Heart left ventricle (tissue), 16 donors: ENCODE measurements at regions of chr6 and their contacts with region 1.

Region 1: GRCh38 chr6:16128759-16129622 is at the start of gene MYLIP:
- DNase-seq: peak; percentile 98 to 99 (median 99)
- ATAC-seq: peak; percentile 96 to 98 (median 98)
- H3K4me3 ChIP-seq: peak within 1 kb of the TSS; percentile 67 to 99 (median 94)
- H3K27ac ChIP-seq: peak within 1 kb of the TSS; percentile 91 to 99 (median 96)
- H3K4me1 ChIP-seq: peaks cover 0 to 49% (median 34%) of the 10 kb centered on the region in 12 donors
- H3K27me3 ChIP-seq: no peaks in the 10 kb centered on the region
- CTCF ChIP-seq: peak; percentile 55 to 87 (median 72)
- POLR2A ChIP-seq: peak; percentile 99 to 100
- total RNA-seq, gene MYLIP: 6.6 to 19.9 (median 13.7) TPM

Region 2: GRCh38 chr6:15691250-15691869 is 437.6 kb before region 1 on chr6:
- intact Hi-C with region 1: loop called (anchors 1 to 5 kb)
- DNase-seq: peak; percentile 84 to 91 (median 87)
- ATAC-seq: peak; percentile 82 to 100 (median 96)
- H3K4me3 ChIP-seq: peak overlapping the region in 10 of 12 donors; percentile 13 to 56 (median 32)
- H3K27ac ChIP-seq: peak overlapping the region in 3 of 12 donors; percentile 37 to 51 (median 43)
- H3K4me1 ChIP-seq: peaks cover 0 to 17% (median 9%) of the 10 kb centered on the region in 12 donors
- H3K27me3 ChIP-seq: no peaks in the 10 kb centered on the region
- CTCF ChIP-seq: peak; percentile 98 to 100 (median 100)
- POLR2A ChIP-seq: no peak

Region 3: GRCh38 chr6:15879382-15880261 is 249.4 kb before region 1 on chr6:
- intact Hi-C with region 1: loop called in 1 of 10 experiments (anchors 5 kb)
- DNase-seq: peak; percentile 68 to 87 (median 81)
- ATAC-seq: peak; percentile 44 to 89 (median 82)
- H3K4me3 ChIP-seq: no peak overlapping the region
- H3K27ac ChIP-seq: peak overlapping the region in 6 of 12 donors; percentile 31 to 72 (median 64)
- H3K4me1 ChIP-seq: peaks cover 0 to 44% (median 10%) of the 10 kb centered on the region in 12 donors
- H3K27me3 ChIP-seq: no peaks in the 10 kb centered on the region
- CTCF ChIP-seq: no peak
- POLR2A ChIP-seq: no peak

Region 4: DNA sequence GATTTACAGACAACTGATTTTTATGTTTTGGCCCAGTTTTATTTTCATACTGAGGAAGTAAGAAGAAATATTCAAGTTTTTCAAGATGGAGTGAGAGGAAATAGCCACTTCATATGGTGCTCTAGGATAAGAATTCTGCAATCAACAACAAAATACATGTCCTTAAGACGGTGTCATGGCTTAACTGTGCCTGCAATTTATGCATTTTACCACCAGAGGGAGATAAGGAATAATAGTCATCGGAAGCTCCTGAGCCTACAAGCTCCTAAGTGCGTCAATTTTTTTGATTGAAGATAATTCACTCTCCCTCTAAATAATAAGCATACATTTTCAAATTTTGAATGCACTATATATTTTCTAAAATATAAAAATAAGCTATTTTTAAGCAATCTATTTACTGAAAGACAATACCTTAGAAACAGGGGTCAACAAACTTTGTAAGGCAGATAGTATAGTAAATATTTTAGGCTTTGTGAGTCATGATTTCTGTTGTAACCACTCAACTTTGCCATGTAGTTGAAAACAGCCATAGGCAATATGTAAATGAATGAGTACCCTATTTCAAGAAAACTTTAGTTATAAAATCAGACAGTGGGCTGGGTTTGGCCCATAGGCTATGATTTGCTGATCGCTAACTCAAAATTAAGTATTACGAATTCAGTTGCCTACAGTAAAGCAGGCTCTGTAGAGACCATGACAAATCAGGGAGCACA is 235.3 kb before region 1 on chr6:
- intact Hi-C with region 1: loop called in 1 of 10 experiments (anchors 10 kb)
- DNase-seq: no peak
- ATAC-seq: no peak
- H3K4me3 ChIP-seq: no peak overlapping the region
- H3K27ac ChIP-seq: no peak overlapping the region
- H3K4me1 ChIP-seq: peaks cover 0 to 38% (median 9%) of the 10 kb centered on the region in 12 donors
- H3K27me3 ChIP-seq: no peaks in the 10 kb centered on the region
- CTCF ChIP-seq: peak in 6 of 12 donors; percentile 19 to 32 (median 28)
- POLR2A ChIP-seq: no peak

Region 5: DNA sequence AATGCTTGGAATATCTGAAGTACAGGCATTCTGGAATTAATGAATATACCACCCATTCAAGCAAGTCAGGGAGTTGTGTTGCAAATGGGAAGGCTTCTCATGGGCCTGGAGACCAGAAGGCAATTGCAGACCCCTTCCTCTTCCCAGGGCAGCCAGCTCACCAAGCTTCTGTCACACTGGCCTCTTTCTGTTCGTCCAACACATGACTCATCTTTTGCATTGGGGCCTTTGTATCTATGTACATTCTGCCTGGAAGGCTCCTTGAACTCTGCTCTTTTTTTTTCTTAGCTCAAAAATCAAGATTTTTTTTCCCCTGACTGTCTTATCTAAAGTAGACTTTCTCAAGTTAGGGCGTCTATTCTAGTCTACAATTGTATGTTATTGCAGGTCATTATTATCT is 133.0 kb before region 1 on chr6:
- intact Hi-C with region 1: loop called in 1 of 10 experiments (anchors 5 kb)
- DNase-seq: no peak
- ATAC-seq: no peak
- H3K4me3 ChIP-seq: no peak overlapping the region
- H3K27ac ChIP-seq: peak overlapping the region in 10 of 12 donors; percentile 11 to 82 (median 54)
- H3K4me1 ChIP-seq: peaks cover 0 to 25% (median 9%) of the 10 kb centered on the region in 12 donors
- H3K27me3 ChIP-seq: no peaks in the 10 kb centered on the region
- CTCF ChIP-seq: no peak
- POLR2A ChIP-seq: no peak

Region 6: DNA sequence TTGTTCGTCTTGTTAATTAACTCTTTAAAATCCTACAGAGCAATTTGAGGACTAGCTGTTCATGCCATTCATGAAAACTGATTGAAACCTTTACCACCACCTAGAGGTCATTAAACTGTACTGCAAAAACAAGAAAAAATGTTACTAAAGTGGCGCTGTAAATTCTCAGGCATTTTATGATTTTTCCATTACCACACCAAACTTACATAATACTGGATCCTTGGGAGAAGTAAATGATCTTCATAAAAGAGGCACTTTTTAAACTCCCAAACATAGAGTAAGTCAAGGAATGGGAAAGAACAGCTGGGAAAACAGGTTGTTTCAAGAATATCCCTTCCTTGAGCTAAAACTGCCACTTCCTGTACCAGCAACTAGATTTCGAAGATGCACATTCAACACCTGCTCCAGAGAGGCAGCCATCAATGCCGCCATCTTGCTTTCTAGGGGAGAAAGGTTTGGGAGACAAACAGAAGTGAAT is 54.2 kb after region 1 on chr6:
- intact Hi-C with region 1: loop called in 5 of 10 experiments (anchors 2 to 10 kb)
- DNase-seq: no peak
- ATAC-seq: peak in 2 of 4 donors; percentile 48 to 59
- H3K4me3 ChIP-seq: no peak overlapping the region
- H3K27ac ChIP-seq: peak overlapping the region in 3 of 12 donors; percentile 42 to 50 (median 48)
- H3K4me1 ChIP-seq: peaks cover 0 to 6% (median 4%) of the 10 kb centered on the region in 12 donors
- H3K27me3 ChIP-seq: peaks cover 0 to 4% (median 0%) of the 10 kb centered on the region in 9 donors
- CTCF ChIP-seq: peak; percentile 63 to 85 (median 78)
- POLR2A ChIP-seq: no peak

Region 7: DNA sequence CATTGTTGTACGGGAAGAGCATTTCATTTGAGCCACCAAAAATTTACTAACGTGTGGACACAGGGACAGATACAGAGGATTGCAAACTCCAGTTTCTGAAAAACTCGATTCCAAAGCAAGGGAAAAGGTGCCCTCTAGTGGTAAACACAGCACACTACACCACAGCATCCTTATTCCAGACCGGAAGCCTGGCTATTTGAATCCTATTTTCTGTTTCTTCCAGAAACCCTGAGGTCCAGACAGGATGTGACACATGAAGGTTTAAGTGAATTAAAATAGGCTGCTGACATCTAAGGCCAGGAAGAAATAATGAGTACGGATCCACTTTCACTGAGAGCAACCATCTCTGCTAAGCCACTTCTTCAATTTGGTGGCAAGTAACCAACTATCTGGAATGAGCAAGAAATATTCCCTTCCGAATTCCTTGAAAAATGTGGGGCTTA is 77.6 kb after region 1 on chr6:
- intact Hi-C with region 1: loop called in 3 of 10 experiments (anchors 5 kb)
- DNase-seq: peak in 4 of 5 donors; percentile 41 to 59 (median 52)
- ATAC-seq: peak; percentile 53 to 78 (median 74)
- H3K4me3 ChIP-seq: no peak overlapping the region
- H3K27ac ChIP-seq: peak overlapping the region in 3 of 12 donors; percentile 28 to 48 (median 35)
- H3K4me1 ChIP-seq: peaks cover 0 to 16% (median 5%) of the 10 kb centered on the region in 12 donors
- H3K27me3 ChIP-seq: peaks cover 0 to 10% (median 0%) of the 10 kb centered on the region in 9 donors
- CTCF ChIP-seq: peak; percentile 93 to 99 (median 97)
- POLR2A ChIP-seq: no peak